GM10248 (cell line): ENCODE measurements at regions of chrX and their contacts with region 1.

Region 1: DNA sequence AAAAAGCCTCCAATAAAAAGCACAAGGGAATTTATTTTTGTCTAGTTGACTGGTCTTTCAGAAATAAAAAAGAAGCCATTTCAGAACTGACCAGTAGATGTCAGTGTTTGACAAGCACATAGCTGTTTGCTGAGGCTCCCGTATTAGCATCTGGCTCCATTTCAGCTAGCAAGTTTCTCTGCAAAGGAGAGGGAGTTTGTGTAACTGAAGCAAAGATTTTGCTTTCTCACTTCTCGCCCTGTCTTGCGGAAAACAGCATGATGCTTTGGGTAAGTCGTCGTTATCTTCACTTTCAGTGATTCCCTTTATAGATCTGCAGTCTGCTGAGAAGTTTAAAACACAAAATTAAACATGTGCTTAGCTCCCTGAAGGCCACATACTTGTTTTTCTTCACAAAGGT is 85.5 kb downstream of the CT47B1 start:
- DNase-seq: peak; percentile 43
- CTCF ChIP-seq: peak; percentile 48

Region 2: GRCh38 chrX:121579016-121579760 is 789.1 kb after region 1 on chrX:
- CTCF ChIA-PET with region 1: interaction called, 18 read pairs
- POLR2A ChIA-PET with region 1: no interaction called
- DNase-seq: no peak
- CTCF ChIP-seq: peak; percentile 33